ENCODE measurements at regions of chr5 and their contacts with region 1.

Region 1: DNA sequence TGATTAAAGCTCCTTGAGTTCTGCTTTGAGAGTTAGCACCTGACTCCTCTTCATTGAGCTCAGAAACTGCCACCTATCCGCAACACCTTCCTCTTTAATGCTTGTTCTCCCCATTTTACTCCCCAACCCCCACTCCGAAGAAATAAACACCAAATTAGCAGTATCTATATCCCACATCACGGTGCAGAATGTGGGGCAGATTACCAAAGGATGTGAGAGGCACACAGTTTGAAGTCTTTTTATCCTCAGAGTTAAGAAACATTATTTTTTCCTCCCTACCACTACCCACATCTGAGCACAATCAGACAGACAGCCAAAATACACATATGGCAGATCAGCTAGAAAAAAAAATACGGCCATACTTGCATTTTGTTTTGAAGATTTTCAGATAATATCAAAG is 26.1 kb upstream of the IL7R start:
- DNase-seq: no peak
- H3K4me3 Mint-ChIP-seq: peak overlapping the region; percentile 27
- H3K27ac Mint-ChIP-seq: peak overlapping the region; percentile 96
- H3K4me1 Mint-ChIP-seq: peaks cover 94% of the 10 kb centered on the region
- H3K27me3 Mint-ChIP-seq: no peaks in the 10 kb centered on the region

Region 2: GRCh38 chr5:35561396-35561795 is 269.2 kb before region 1 on chr5:
- CTCF ChIA-PET with region 1: no interaction called
- POLR2A ChIA-PET with region 1: no interaction called
- intact Hi-C with region 1: no loop called
- DNase-seq: no peak
- H3K4me3 Mint-ChIP-seq: no peak overlapping the region
- H3K27ac Mint-ChIP-seq: no peak overlapping the region
- H3K4me1 Mint-ChIP-seq: no peaks in the 10 kb centered on the region
- H3K27me3 Mint-ChIP-seq: peaks cover 3% of the 10 kb centered on the region

Region 3: DNA sequence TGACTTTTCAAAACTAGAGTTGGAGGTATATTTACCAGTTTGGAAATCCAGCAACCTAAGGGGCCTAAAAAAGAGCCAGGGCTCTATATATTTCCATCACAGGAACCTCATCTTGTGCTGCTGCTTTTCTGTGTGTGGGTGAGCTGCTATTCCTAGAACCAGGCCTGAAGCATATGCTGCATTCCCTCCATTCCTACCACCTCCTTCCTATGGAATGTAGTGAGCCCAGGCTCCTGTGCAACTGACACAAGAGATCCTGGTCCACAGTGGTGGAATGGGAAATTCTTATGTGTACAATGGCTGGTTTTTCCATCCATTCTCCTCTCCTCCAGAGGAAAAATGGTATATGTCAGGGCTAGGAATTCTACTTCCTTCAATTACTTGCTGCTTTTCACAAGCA is 173.9 kb before region 1 on chr5:
- CTCF ChIA-PET with region 1: no interaction called
- POLR2A ChIA-PET with region 1: no interaction called
- intact Hi-C with region 1: no loop called
- DNase-seq: no peak
- H3K4me3 Mint-ChIP-seq: no peak overlapping the region
- H3K27ac Mint-ChIP-seq: no peak overlapping the region
- H3K4me1 Mint-ChIP-seq: peaks cover 21% of the 10 kb centered on the region
- H3K27me3 Mint-ChIP-seq: no peaks in the 10 kb centered on the region

Region 4: DNA sequence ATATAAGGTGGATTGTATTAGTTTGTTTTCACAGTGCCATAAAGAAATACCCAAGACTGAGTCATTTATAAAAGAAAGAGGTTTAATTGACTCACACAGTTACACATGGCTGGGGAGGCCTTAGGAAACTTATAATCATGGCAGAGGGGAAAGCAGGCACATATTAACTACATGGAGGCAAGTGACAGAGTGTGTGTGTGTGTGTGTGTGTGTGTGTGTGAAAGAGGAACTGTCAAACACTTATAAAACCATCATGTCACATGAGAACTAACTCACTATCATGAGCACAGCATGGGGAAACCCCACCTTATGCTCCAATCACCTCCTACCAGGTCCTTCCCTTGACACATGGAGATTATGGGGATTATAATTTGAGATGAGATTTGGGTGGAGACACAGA is 94.3 kb before region 1 on chr5:
- CTCF ChIA-PET with region 1: no interaction called
- POLR2A ChIA-PET with region 1: no interaction called
- intact Hi-C with region 1: loop called (anchors 5 kb)
- DNase-seq: peak; percentile 68
- H3K4me3 Mint-ChIP-seq: no peak overlapping the region
- H3K27ac Mint-ChIP-seq: peak overlapping the region; percentile 77
- H3K4me1 Mint-ChIP-seq: peaks cover 47% of the 10 kb centered on the region
- H3K27me3 Mint-ChIP-seq: no peaks in the 10 kb centered on the region

Region 5: GRCh38 chr5:35794684-35795375 is 35.8 kb before region 1 on chr5:
- CTCF ChIA-PET with region 1: interaction called, 5 read pairs
- POLR2A ChIA-PET with region 1: interaction called, 13 read pairs
- intact Hi-C with region 1: no loop called
- DNase-seq: no peak
- H3K4me3 Mint-ChIP-seq: peak overlapping the region; percentile 31
- H3K27ac Mint-ChIP-seq: peak overlapping the region; percentile 89
- H3K4me1 Mint-ChIP-seq: peaks cover 86% of the 10 kb centered on the region
- H3K27me3 Mint-ChIP-seq: no peaks in the 10 kb centered on the region

Region 6: GRCh38 chr5:35857606-35858205 is 27.1 kb after region 1 on chr5:
- CTCF ChIA-PET with region 1: interaction called, 5 read pairs
- POLR2A ChIA-PET with region 1: interaction called, 160 read pairs
- intact Hi-C with region 1: no loop called
- DNase-seq: no peak
- H3K4me3 Mint-ChIP-seq: peak overlapping the region; percentile 93
- H3K27ac Mint-ChIP-seq: peak overlapping the region; percentile 100
- H3K4me1 Mint-ChIP-seq: peaks cover 76% of the 10 kb centered on the region
- H3K27me3 Mint-ChIP-seq: no peaks in the 10 kb centered on the region

Region 7: GRCh38 chr5:35938568-35939227 is 108.1 kb after region 1 on chr5 and contains the start of gene CAPSL:
- CTCF ChIA-PET with region 1: no interaction called
- POLR2A ChIA-PET with region 1: no interaction called
- intact Hi-C with region 1: no loop called
- DNase-seq: no peak
- H3K4me3 Mint-ChIP-seq: no peak within 1 kb of the TSS
- H3K27ac Mint-ChIP-seq: no peak within 1 kb of the TSS
- H3K4me1 Mint-ChIP-seq: no peaks in the 10 kb centered on the region
- H3K27me3 Mint-ChIP-seq: peaks cover 15% of the 10 kb centered on the region
- total RNA-seq, gene CAPSL: 0.73 to 1.0 TPM

Measured in activated CD4-positive, alpha-beta memory T cell treated with anti-CD3 and anti-CD28 coated beads for 36 hours (primary cell).